Posterior cingulate gyrus (tissue), 11 donors: ENCODE measurements at regions of chr14 and their contacts with region 1.

Region 1: GRCh38 chr14:58297762-58298476 is 436 bp upstream of the ARID4A start:
- DNase-seq: peak; percentile 96 to 100 (median 98)

Region 2: DNA sequence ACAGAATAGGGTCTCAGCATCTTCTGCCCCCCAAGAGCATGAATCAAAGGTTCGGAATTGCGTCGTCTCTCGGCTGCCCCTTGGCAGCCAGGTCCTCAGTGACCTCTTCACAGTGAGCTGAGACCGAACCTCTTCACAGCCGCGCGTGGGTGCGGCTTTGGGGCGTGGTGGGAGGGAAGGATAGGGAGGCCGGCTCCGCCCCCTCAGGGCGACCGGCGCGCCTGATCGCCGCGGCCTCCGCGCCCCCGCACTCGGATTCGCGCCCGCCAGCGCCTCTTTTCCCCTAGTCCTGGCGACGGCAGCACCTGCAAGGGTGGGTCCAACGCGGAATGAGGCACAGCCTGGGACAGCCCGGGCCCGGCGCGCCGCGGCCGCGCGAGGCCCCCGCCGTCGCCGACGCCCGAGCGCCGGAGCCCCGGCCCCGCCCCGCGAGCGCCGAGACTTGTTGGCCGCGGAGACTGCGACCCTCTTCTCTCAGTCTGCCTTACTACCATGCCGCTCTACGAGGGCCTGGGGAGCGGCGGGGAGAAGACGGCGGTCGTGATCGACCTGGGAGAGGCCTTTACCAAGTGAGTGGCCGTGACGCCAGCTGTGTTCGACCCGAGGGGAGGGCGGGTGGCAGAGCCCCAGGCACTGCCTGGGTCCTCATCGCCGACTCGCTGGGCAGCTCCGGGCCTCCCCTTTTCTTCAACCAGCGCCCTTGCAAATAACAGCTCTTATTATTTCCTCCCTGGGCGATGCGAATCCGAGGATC is 98.0 kb before region 1 on chr14 and contains the start of gene ACTR10:
- intact Hi-C with region 1: loop called (anchors 2 kb)
- DNase-seq: peak; percentile 69 to 96 (median 78)

Region 3: GRCh38 chr14:58244556-58245387 is 53.1 kb before region 1 on chr14 and contains the start of gene PSMA3:
- intact Hi-C with region 1: loop called (anchors 1 kb)
- DNase-seq: peak; percentile 94 to 99 (median 97)

Region 4: GRCh38 chr14:58331111-58331510 is 33.2 kb after region 1 on chr14:
- intact Hi-C with region 1: loop called (anchors 2 kb)
- DNase-seq: peak in 9 of 10 donors; percentile 34 to 91 (median 74)

Region 5: DNA sequence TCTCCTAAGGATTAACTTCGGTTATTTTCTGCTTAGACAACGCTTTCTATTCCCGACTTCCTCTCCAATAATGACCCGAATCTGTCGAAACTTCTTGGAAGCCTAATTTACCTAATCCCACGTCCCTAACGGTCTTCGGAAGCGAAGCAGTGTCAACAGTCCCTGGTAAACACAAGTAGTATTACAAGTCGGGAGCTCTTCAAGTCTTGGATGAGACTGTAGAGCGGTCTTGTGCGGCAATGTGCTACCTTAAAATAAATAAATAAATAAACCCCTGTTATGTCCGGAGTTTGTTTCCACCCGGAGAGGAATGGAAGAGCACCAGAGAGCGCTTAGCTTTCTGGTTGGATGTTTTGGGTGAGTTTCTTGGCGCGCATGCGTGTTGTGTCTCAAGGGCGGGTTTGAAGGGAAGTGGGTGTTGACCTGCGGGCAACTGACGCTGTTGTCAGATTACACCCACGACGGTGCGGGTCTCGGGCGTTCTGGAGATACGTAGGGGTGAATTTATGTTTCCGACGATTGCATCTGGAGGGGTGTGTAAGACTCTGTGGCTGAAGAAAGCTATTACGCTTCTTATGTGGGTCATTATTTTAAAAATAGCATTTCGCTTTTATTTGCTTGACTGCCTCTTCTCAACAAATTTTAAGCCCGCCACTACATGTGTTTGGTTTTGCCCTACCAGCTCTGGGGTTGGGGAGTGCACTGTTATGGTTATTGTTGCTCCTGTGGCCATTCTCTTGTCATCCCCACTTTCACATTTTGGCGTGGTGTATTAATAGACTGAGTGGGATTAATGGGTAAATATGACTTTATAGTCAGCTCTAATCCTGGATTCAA is 129.6 kb after region 1 on chr14 and contains the starts of genes KIAA0586 and TIMM9:
- intact Hi-C with region 1: loop called (anchors 2 kb)
- DNase-seq: peak; percentile 85 to 98 (median 91)

Region 6: DNA sequence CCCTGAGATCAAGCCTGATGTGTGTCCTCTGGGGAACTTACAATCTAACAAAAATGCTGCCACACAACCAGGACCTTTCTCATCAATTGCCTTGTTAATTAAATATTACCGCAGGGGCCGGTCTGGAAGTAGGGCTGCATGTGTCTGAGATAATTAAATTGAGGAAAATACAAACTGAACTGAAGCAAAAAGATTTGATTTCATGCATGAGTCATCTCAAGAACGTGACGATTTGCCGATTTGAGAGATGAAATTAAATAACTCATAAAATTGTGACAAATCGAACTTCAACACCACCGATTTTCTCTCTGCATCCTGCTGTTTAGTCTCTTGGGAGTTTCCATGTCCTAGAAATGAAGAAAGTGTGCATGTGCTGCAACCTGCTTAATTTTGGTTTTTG is 796.0 kb after region 1 on chr14:
- intact Hi-C with region 1: no loop called
- DNase-seq: no peak